ENCODE measurements at regions of chr11 and their contacts with region 1.

Region 1: DNA sequence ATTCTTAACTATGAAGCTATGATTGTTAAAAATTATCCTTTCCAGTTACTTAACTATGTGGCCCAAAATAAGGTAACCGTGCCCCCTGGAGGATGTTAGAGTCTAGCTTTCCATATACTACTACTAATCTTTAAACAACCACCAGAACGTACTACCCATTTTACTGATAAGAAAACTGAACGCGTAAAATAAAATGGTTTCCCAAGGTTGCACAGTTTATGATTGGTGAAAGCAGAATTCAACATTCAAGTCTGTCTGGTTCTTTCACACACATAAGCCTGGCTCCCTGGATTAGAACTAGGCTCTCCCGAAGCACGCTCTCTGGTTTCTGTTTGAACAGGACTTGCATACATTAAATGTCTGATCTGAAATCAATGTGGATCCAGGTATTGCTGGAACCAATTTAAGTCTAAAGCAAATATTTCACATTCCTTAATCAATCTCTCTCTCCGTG is 437.9 kb upstream of the CCDC90B start:
- DNase-seq: peak; percentile 26
- CTCF ChIP-seq: peak; percentile 61

Region 2: DNA sequence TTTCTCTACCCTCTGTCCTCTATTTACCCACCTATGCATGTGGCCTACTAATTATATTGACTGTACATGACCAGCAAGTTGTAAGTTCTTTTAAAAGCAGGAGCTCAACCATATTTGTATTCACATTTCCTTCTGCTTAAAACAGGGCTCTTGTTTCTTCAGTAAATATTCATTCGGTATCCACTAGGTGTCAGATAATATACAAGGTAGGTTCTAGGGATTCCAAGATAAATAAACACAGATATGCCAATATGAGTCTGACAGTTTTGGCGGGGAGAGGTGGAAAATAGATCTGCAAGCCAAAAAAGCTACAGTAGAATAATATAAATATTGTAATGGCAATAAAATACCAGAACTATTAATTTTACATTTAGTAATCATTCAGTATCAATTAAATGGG is 637.0 kb before region 1 on chr11:
- in situ Hi-C with region 1: loop called (anchors 25 kb)
- DNase-seq: no peak
- CTCF ChIP-seq: peak; percentile 22

Region 3: DNA sequence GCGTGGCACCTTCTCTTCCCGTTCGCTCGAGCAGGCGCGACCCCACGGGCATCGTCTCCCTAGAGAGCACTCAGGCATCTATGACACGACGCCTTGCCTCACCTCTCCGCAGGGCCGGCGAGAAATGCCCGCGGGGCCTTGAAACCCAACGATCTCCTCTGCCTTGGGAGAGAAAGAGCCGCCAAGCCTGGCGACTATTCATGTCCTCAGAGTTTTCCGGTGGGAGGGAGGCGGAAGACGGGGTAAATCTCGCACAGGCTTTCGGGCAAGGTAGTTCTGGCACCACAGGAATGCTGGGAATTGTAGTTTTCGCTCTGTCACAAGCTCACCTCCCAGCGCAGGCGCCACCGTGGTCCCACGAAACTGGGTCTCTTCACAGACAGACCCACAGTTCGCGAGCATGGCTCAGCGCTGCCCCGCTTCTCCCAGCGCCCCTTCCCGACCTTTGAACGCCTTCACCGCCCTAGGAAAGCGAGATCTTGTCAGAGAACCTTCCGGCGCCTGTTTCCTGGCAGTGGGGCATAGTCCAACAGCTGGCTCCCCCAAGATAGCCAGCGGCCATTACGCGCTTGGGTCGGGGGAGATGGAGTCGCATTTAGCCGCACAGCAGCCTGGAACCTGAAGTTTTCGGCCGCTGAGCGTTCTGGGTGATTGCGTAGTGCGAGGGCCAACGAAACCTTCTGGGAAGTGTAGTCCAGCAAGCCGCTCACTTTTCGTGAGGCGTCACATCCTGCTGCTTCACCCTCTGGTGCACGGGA is 438.1 kb before region 1 on chr11 and contains the start of gene CCDC90B:
- in situ Hi-C with region 1: loop called (anchors 25 kb)
- DNase-seq: peak; percentile 86
- CTCF ChIP-seq: peak; percentile 47

Region 4: GRCh38 chr11:83554876-83555275 is 169.2 kb before region 1 on chr11:
- in situ Hi-C with region 1: no loop called
- DNase-seq: no peak
- CTCF ChIP-seq: no peak

Region 5: DNA sequence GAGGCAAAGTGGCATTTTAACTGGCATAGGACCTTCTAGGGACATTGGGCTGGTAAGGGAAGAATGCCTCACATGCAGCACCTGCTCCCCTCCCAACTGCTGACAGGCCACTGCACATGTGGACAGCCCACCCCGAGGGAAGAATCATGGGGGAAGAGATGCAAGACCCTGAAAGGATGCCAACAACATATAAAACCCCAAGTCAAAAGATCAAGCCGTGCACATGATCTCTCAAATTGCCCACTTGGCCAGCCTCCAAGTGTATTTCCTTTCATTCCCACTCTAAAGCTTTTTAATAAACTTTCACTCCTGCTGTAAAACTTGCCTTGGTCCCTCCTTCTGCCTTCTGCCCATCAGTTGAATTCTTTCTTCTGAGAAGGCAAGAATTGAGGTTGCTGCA is 510.0 kb after region 1 on chr11:
- in situ Hi-C with region 1: no loop called
- DNase-seq: no peak
- CTCF ChIP-seq: no peak